PC-3 (cell line): ENCODE measurements at regions of chr13 and their contacts with region 1.

Region 1: DNA sequence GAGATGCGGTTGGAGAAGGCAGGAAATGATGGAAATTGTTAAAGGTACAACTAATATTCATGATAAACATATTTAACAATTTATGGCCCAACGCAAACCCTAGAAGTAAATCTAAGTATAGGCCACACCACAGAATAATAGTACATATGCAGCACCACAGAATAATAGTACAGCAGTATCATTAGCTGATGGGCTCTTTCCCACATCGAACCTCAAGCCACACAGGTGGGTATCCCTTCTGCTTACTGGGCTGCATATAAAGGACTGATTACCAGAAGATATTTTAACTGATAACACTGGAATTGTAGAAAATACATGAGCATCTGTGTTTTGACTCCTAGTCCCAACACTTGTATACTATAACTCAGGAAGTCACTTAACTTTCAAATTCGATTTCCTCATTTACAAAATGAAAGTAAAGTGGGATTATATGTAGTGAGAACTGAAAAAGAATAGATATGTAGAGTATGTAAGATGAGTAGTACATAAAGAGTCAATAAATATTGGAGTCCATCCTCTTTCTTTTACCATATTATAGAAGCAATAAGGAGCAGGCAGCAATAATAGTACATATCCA is 91.5 kb downstream of the TSC22D1 start:
- DNase-seq: no peak
- ATAC-seq: no peak
- H3K4me3 ChIP-seq: no peak overlapping the region
- H3K27ac ChIP-seq: no peak overlapping the region
- H3K4me1 ChIP-seq: peaks cover 6% of the 10 kb centered on the region; the same call in 1 of the 2 replicates
- H3K27me3 ChIP-seq: no peaks in the 10 kb centered on the region
- CTCF ChIP-seq: no peak

Region 2: GRCh38 chr13:44577236-44578066 is 92.8 kb after region 1 on chr13:
- CTCF ChIA-PET with region 1: interaction called, 3 read pairs
- POLR2A ChIA-PET with region 1: interaction called, 5 read pairs
- intact Hi-C with region 1: loop called (anchors 5 kb)
- DNase-seq: peak; percentile 93
- ATAC-seq: peak; percentile 68
- H3K4me3 ChIP-seq: peak overlapping the region; percentile 84
- H3K27ac ChIP-seq: peak overlapping the region; percentile 80
- H3K4me1 ChIP-seq: peaks cover 36% of the 10 kb centered on the region
- H3K27me3 ChIP-seq: no peaks in the 10 kb centered on the region
- CTCF ChIP-seq: no peak

Region 3: DNA sequence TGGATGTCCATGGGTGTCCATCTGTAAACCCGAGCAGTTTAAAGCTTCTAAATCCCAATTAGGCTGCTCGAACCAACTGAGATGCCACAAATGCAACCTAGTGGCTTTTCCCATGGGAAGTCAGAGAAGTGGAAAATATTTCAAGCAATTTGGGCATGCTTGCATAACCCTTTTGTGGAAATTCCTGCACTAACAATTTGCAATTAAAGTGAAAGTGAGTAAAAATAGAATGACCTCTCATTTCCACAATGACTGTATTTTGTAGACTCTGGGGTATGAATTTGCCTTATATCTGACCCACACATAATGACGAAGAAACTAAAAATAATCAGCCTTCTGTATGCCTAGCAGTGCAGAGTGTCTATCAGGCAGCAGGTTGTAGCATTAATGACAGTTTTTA is 183.3 kb after region 1 on chr13:
- CTCF ChIA-PET with region 1: no interaction called
- POLR2A ChIA-PET with region 1: no interaction called
- intact Hi-C with region 1: no loop called
- DNase-seq: no peak
- ATAC-seq: no peak
- H3K4me3 ChIP-seq: no peak overlapping the region
- H3K27ac ChIP-seq: 0 out of 2 replicates have a peak overlapping the region, but pooled peaks have one; percentile 12
- H3K4me1 ChIP-seq: peaks cover 18% of the 10 kb centered on the region
- H3K27me3 ChIP-seq: no peaks in the 10 kb centered on the region
- CTCF ChIP-seq: no peak

Region 4: GRCh38 chr13:44815623-44816022 is 331.0 kb after region 1 on chr13:
- CTCF ChIA-PET with region 1: interaction called, 3 read pairs
- POLR2A ChIA-PET with region 1: interaction called, 4 read pairs
- intact Hi-C with region 1: loop called (anchors 5 kb)
- DNase-seq: peak; percentile 91
- ATAC-seq: peak; percentile 81
- H3K4me3 ChIP-seq: no peak overlapping the region
- H3K27ac ChIP-seq: peak overlapping the region; percentile 95
- H3K4me1 ChIP-seq: peaks cover 66% of the 10 kb centered on the region
- H3K27me3 ChIP-seq: no peaks in the 10 kb centered on the region
- CTCF ChIP-seq: no peak

Region 5: DNA sequence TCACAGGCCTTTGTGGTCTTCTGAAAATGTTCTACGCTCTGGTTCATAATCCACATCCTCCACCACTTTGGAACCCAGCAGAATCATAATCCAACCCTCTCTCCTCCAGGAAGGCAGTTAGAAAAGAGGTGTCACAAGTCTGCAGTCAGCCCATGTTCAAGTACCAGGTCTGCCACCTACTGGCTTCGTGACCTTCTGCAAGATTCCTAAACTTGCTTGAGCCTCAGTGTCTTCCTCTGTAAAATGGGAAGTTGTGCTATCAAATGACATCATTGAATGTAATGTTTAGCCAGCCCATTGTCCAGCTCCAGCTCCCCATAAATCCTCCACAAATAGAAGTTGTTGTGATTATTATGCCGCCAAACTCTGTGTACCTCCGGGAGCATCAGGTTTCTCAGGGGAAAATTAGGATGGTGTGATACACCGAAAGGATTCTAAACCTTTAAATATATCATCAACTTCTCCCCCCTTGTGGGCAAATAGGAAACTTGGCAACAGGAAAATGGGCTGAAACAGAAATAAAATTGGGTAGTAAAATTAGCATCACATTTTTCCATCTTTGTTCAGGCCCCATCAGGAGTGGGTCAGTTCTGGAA is 394.9 kb after region 1 on chr13:
- CTCF ChIA-PET with region 1: no interaction called
- POLR2A ChIA-PET with region 1: no interaction called
- intact Hi-C with region 1: loop called (anchors 5 kb)
- DNase-seq: peak; percentile 50
- ATAC-seq: peak; percentile 37
- H3K4me3 ChIP-seq: no peak overlapping the region
- H3K27ac ChIP-seq: no peak overlapping the region
- H3K4me1 ChIP-seq: peaks cover 11% of the 10 kb centered on the region
- H3K27me3 ChIP-seq: no peaks in the 10 kb centered on the region
- CTCF ChIP-seq: peak; percentile 64

Region 6: DNA sequence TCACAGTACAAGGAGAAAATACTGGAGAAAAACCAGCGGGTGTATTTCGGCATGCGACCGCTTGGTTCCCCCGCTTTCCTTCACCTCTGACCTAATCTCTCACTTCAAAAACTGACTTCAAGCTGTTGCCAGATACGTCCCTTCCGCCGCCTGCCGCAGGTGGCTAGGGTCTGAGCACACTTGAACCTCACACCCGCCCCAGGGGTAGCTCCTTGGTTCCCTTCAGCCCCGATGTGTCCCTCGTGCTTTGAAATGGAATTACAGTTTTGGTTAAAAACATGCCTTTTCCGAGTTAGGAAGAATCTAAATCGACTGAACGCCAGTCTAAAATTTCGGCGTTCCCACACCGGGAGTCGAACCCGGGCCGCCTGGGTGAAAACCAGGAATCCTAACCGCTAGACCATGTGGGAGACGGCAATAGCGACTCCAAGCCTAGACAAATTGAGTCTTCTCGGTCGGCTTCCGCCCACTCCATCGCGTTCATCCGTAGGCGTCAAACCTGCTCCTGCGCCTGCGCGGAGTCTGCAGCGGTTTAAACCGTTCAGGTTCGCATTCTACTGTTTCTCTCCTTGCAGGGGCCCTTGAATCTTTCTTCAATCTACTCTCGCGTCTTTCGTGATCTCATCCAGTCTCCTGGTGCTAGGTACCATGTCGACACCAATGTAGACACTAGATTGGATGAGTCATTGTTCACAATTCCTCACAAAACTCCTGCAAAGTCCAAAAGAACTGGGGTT is 433.1 kb after region 1 on chr13:
- CTCF ChIA-PET with region 1: no interaction called
- POLR2A ChIA-PET with region 1: no interaction called
- intact Hi-C with region 1: loop called (anchors 1 kb)
- DNase-seq: peak; percentile 92
- ATAC-seq: peak; percentile 52
- H3K4me3 ChIP-seq: peak overlapping the region; percentile 71
- H3K27ac ChIP-seq: peak overlapping the region; percentile 94
- H3K4me1 ChIP-seq: peaks cover 28% of the 10 kb centered on the region
- H3K27me3 ChIP-seq: no peaks in the 10 kb centered on the region
- CTCF ChIP-seq: no peak

Region 7: DNA sequence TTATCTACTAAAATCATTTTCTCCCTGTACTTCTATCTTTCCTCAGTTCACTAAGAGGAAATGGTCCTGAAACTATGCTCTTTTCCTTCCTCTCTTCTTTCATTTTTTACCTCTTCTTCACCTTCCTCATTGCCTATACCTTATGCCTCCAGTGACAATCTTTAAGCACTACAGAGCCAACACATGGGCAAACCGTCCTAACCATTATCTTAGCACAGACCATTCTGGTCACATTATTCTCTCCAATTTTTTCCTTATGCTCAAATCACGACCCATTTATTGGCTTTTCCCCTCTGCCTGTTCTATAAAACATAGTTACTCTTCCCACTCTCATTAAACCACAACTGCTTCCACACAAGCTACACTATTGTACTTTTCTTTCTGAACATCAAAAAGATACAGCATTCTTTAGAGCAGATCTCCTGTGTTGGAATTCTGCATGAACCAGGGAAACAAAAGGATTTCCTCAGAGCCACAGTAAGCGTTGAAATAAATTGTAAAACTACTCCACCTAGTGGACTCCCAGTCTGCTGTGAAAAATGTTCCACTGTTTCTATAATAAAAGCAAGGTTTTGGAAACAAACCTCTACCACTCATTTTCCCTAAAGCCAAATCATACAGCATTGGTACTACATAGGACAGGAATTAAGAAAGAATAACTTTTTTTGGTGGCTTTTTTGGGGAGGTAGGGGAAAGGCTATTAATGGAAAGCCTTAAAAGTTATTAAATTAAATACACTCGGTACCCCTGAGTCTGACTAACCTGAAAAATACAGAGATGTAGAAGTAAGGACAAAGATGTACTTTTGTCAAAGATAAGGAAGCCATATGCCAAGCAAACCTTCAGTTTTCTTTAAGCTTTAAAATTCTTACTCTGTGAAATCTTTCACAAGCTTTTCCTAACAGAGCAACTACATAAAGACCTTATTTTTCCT is 485.2 kb after region 1 on chr13:
- CTCF ChIA-PET with region 1: no interaction called
- POLR2A ChIA-PET with region 1: interaction called, 5 read pairs
- intact Hi-C with region 1: loop called (anchors 2 kb)
- DNase-seq: peak; percentile 70
- ATAC-seq: peak; percentile 74
- H3K4me3 ChIP-seq: no peak overlapping the region
- H3K27ac ChIP-seq: no peak overlapping the region
- H3K4me1 ChIP-seq: peaks cover 6% of the 10 kb centered on the region; the same call in 1 of the 2 replicates
- H3K27me3 ChIP-seq: no peaks in the 10 kb centered on the region
- CTCF ChIP-seq: peak; percentile 86

Region 8: DNA sequence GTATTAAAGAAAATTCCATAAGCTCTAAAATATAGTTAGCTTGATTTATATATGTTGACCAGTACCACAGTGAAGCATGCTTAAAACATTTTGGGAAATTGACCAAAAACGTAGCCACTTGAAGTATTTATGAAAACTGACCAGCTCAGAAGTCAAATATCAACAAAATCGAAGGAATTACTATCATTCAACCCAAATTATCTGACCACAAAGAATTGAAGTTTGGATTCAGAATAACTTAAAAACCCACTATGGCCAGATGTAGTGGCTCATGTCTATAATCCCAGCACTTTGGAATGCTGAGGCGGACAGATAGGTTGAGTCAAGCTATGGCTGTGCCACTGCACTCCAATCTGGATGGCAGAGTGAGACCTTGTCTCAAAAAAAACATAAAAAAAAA is 536.6 kb after region 1 on chr13:
- CTCF ChIA-PET with region 1: no interaction called
- POLR2A ChIA-PET with region 1: interaction called, 10 read pairs
- intact Hi-C with region 1: no loop called
- DNase-seq: no peak
- ATAC-seq: no peak
- H3K4me3 ChIP-seq: no peak overlapping the region
- H3K27ac ChIP-seq: no peak overlapping the region
- H3K4me1 ChIP-seq: no peaks in the 10 kb centered on the region
- H3K27me3 ChIP-seq: no peaks in the 10 kb centered on the region
- CTCF ChIP-seq: no peak